Mammary epithelial cell (primary cell): ENCODE measurements at regions of chr4 and their contacts with region 1.

Region 1: GRCh38 chr4:8428293-8429097 is 12.0 kb downstream of the ACOX3 start:
- DNase-seq: peak; percentile 85
- H3K4me3 ChIP-seq: peak overlapping the region; percentile 60 to 74 (median 72)
- H3K27ac ChIP-seq: peak overlapping the region; percentile 33
- H3K4me1 ChIP-seq: peaks cover 14% of the 10 kb centered on the region
- H3K27me3 ChIP-seq: no peaks in the 10 kb centered on the region
- CTCF ChIP-seq: peak; percentile 32 to 37

Region 2: GRCh38 chr4:8274765-8275547 is 153.5 kb before region 1 on chr4:
- CTCF ChIA-PET with region 1: interaction called, 17 read pairs
- dilution Hi-C with region 1: no loop called
- in situ Hi-C with region 1: no loop called
- intact Hi-C with region 1: no loop called
- DNase-seq: peak; percentile 17
- H3K4me3 ChIP-seq: no peak overlapping the region
- H3K27ac ChIP-seq: no peak overlapping the region
- H3K4me1 ChIP-seq: peaks cover 10% of the 10 kb centered on the region
- H3K27me3 ChIP-seq: peaks cover 7% of the 10 kb centered on the region
- CTCF ChIP-seq: peak; percentile 20 to 47

Region 3: DNA sequence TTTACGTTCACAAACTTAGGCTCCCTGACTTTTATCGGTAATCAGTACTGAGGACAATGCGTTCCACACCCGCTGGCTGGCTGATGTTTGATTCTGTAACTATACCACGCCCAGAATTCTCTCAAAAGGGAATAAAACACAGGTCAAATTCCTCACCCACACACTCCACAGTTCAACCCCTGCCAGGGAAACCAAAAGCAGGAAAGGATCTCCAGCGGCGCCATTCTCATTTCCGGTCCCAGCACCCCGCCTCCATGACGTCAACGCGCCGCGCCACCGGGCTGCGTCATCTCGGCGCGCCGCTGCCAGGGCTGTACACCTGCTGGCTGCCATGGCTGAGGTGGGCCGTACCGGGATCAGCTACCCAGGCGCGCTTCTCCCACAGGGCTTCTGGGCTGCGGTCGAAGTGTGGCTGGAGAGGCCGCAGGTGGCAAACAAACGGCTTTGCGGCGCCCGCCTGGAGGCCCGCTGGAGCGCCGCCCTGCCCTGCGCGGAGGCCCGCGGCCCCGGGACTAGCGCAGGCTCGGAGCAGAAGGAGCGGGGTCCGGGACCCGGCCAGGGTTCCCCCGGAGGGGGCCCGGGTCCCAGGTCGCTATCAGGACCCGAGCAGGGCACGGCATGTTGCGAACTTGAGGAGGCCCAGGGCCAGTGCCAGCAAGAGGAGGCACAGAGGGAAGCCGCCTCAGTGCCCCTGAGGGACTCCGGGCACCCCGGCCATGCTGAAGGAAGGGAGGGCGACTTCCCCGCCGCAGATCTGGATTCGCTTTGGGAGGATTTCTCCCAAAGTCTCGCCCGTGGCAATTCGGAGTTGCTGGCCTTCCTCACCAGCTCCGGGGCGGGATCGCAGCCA is 12.2 kb after region 1 on chr4 and contains the starts of genes ACOX3 and TRMT44:
- CTCF ChIA-PET with region 1: no interaction called
- dilution Hi-C with region 1: no loop called
- in situ Hi-C with region 1: no loop called
- intact Hi-C with region 1: loop called (anchors 1 kb)
- DNase-seq: peak; percentile 94
- H3K4me3 ChIP-seq: peak within 1 kb of the TSS; percentile 63 to 87 (median 69)
- H3K27ac ChIP-seq: peak within 1 kb of the TSS; percentile 92
- H3K4me1 ChIP-seq: peaks cover 42% of the 10 kb centered on the region
- H3K27me3 ChIP-seq: no peaks in the 10 kb centered on the region
- CTCF ChIP-seq: no peak
- total RNA-seq, gene ACOX3: 19.6 to 94.0 TPM
- total RNA-seq, gene TRMT44: 18.5 to 20.3 TPM